Pancreas (tissue), 10 donors: ENCODE measurements at regions of chr1 and their contacts with region 1.

Region 1: GRCh38 chr1:76782809-76783208 is 84.5 kb upstream of the ST6GALNAC5 start:
- DNase-seq: no peak
- ATAC-seq: peak in 2 of 4 donors; percentile 21 to 59
- H3K4me3 ChIP-seq: no peak overlapping the region
- H3K27ac ChIP-seq: no peak overlapping the region
- H3K4me1 ChIP-seq: no peaks in the 10 kb centered on the region
- H3K27me3 ChIP-seq: no peaks in the 10 kb centered on the region
- CTCF ChIP-seq: no peak

Region 2: GRCh38 chr1:76425201-76426145 is 357.3 kb before region 1 on chr1:
- intact Hi-C with region 1: no loop called
- DNase-seq: no peak
- ATAC-seq: no peak
- H3K4me3 ChIP-seq: no peak overlapping the region
- H3K27ac ChIP-seq: no peak overlapping the region
- H3K4me1 ChIP-seq: no peaks in the 10 kb centered on the region
- H3K27me3 ChIP-seq: no peaks in the 10 kb centered on the region
- CTCF ChIP-seq: no peak

Region 3: GRCh38 chr1:76725864-76726619 is 56.8 kb before region 1 on chr1:
- intact Hi-C with region 1: loop called in 1 of 3 experiments (anchors 5 kb)
- DNase-seq: no peak
- ATAC-seq: peak in 2 of 4 donors; percentile 37 to 55
- H3K4me3 ChIP-seq: no peak overlapping the region
- H3K27ac ChIP-seq: no peak overlapping the region
- H3K4me1 ChIP-seq: no peaks in the 10 kb centered on the region
- H3K27me3 ChIP-seq: no peaks in the 10 kb centered on the region
- CTCF ChIP-seq: no peak